Mammary epithelial cell (primary cell): ENCODE measurements at regions of chr17 and their contacts with region 1.

Region 1: GRCh38 chr17:71084219-71084618 is 914.9 kb downstream of the KCNJ2 start:
- DNase-seq: peak; percentile 35
- H3K4me3 ChIP-seq: no peak overlapping the region
- H3K27ac ChIP-seq: no peak overlapping the region
- H3K4me1 ChIP-seq: no peaks in the 10 kb centered on the region
- H3K27me3 ChIP-seq: no peaks in the 10 kb centered on the region
- CTCF ChIP-seq: peak; percentile 39 to 63

Region 2: DNA sequence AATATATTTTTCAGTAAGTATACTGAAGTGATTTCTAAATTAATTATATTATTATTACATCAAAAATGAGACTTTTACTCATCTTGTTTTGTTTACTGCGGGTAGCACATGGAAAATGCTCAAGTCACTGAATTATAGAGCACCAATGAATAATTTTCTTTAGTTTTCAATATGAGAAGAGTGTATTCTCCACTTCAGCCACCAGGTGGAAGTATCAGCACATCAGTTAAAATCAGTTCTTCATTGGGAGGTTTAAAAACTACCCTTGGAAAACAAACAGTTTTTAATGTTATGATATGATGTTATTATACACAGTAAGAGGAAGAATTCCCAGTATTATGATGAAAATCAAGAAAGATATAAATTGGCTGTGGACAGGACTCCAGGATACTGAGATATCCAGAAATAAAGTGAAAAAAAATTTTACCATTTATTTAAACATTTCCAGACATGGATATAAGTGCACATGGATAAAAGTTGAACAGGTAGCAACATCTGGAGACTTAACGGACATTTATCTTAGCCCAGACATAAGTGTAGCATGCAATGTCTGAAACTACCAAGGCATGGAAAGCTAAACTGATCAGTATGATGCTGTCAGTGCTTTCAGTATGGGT is 447.6 kb before region 1 on chr17:
- CTCF ChIA-PET with region 1: no interaction called
- dilution Hi-C with region 1: no loop called
- in situ Hi-C with region 1: no loop called
- intact Hi-C with region 1: loop called (anchors 5 kb)
- DNase-seq: peak; percentile 30
- H3K4me3 ChIP-seq: no peak overlapping the region
- H3K27ac ChIP-seq: no peak overlapping the region
- H3K4me1 ChIP-seq: no peaks in the 10 kb centered on the region
- H3K27me3 ChIP-seq: peaks cover 3% of the 10 kb centered on the region
- CTCF ChIP-seq: peak; percentile 60 to 67

Region 3: DNA sequence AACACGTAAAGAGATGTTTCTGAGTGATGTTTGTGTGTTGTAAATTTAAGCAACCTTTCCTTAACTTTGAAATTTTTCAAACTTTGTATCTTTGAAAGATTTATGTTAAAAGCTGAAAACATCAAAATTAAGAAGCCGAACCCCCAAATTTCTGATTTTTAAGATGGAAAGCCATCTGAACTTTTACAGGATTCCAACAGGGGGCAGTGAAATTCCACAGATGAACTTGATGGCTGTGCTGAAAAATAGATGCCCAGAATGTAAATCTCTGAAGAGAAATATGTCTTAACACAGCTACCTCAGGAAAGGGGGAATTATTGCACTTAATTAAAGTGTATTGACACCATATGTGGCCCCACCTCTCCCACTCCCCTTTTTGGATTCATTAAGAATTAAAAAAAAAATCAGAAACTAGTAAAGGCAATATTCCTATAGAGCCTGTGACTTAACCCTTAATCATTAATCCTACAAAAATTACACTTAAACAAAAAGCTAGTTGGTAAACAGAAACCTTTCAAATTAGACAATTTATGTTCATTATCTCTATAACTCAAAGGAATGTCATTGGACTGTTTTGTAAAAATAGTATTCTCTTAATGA is 317.0 kb before region 1 on chr17:
- CTCF ChIA-PET with region 1: no interaction called
- dilution Hi-C with region 1: no loop called
- in situ Hi-C with region 1: no loop called
- intact Hi-C with region 1: loop called (anchors 1 kb)
- DNase-seq: peak; percentile 9
- H3K4me3 ChIP-seq: no peak overlapping the region
- H3K27ac ChIP-seq: no peak overlapping the region
- H3K4me1 ChIP-seq: no peaks in the 10 kb centered on the region
- H3K27me3 ChIP-seq: no peaks in the 10 kb centered on the region
- CTCF ChIP-seq: peak; percentile 67 to 71

Region 4: DNA sequence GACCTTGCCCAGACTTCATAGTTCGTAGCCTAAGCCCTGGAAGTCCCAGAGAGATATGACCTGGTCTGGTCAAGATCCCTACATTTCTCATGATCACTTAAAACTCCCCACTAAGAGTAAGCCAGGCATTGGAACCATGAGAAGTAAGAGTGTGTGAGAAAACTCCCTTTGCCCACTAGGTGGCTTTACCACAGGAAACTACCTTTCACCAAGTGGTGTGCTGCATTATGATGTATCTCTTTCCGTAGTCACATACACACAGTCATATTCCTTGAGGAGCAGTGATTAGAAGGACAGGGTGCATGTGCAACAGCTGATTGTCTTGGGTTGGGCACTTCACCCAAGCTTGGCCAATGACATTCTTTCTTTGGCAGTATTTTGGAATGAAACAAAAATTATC is 275.6 kb before region 1 on chr17:
- CTCF ChIA-PET with region 1: no interaction called
- dilution Hi-C with region 1: no loop called
- in situ Hi-C with region 1: no loop called
- intact Hi-C with region 1: loop called (anchors 1 kb)
- DNase-seq: peak; percentile 8
- H3K4me3 ChIP-seq: no peak overlapping the region
- H3K27ac ChIP-seq: no peak overlapping the region
- H3K4me1 ChIP-seq: no peaks in the 10 kb centered on the region
- H3K27me3 ChIP-seq: no peaks in the 10 kb centered on the region
- CTCF ChIP-seq: peak; percentile 59 to 63

Region 5: DNA sequence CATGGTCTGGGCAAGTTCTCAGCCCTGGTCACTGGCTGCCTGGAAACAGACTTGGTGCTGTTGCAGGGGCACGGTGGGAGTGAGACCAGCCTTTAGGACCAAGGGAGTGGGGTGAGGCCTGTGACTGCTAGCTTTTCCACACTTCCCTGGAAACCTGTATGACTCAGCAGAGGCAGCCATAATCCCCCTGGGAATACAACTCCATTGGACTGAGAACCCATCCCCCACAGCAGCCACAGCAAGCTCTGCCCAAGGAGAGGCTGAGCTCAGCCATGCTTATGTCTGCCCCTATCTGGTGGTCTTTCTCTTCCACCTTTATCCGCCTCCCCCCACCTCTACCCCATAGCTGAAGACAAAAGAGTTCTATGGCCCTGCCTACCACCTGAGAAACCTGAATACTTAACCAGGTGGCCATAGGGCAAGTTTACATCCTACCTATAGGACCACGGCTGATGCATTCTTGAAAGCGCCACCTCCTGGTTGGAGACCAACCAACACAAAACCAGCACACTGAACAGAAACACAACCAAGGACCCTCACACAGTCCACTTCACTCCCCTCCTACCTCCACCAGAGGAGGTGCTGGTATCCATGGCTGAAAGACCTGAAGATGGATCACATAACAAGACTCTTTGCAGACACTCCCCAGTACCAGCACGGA is 220.4 kb after region 1 on chr17:
- CTCF ChIA-PET with region 1: no interaction called
- dilution Hi-C with region 1: no loop called
- in situ Hi-C with region 1: no loop called
- intact Hi-C with region 1: no loop called
- DNase-seq: no peak
- H3K4me3 ChIP-seq: no peak overlapping the region
- H3K27ac ChIP-seq: no peak overlapping the region
- H3K4me1 ChIP-seq: peaks cover 8% of the 10 kb centered on the region
- H3K27me3 ChIP-seq: no peaks in the 10 kb centered on the region
- CTCF ChIP-seq: no peak